ENCODE measurements at regions of chr2 and their contacts with region 1.

Region 1: GRCh38 chr2:212777020-212777491 is 238.5 kb upstream of the ERBB4 start:
- DNase-seq: peak; percentile 15 to 52
- H3K4me3 ChIP-seq: no peak overlapping the region
- H3K27ac ChIP-seq: no peak overlapping the region
- H3K4me1 ChIP-seq: no peaks in the 10 kb centered on the region; the same call in 1 of the 2 replicates
- H3K27me3 ChIP-seq: no peaks in the 10 kb centered on the region
- CTCF ChIP-seq: peak; percentile 73

Region 2: DNA sequence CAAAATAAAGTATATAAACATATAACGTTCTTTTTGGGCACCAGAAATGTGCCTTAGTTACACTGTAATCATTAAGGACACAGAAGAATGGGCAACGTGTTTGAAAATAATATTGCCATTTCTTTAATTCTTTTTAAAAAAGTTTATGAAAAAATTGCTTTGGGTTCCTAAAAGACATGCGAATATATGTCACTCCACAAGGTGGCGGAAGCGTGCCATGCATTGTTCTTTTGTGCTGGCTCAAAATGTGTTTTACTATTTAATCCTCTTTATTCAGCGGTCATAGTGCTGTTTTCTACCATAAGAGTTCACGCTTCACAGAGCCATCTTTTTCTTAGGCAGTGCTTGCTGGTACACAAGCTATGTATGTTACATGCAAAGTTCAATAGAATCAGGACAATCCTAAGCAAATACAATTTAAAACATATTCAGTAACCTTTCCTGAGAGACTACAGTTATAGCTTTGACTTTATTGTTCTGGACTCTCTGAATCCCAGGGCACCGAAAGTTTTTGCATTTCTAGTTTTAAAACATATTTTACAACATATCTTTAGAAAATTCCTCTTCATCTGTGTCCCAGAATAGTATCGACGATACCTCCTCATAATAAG is 90.7 kb before region 1 on chr2:
- CTCF ChIA-PET with region 1: no interaction called
- POLR2A ChIA-PET with region 1: no interaction called
- intact Hi-C with region 1: loop called (anchors 2 kb)
- DNase-seq: peak; percentile 35 to 41
- H3K4me3 ChIP-seq: no peak overlapping the region
- H3K27ac ChIP-seq: no peak overlapping the region
- H3K4me1 ChIP-seq: 0 out of 2 replicates have a peak, but pooled peaks cover 6% of the 10 kb centered on the region
- H3K27me3 ChIP-seq: no peaks in the 10 kb centered on the region
- CTCF ChIP-seq: peak; percentile 85

Measured in PC-9 (cell line).